BJ (cell line): ENCODE measurements at regions of chr18 and their contacts with region 1.

Region 1: GRCh38 chr18:3604498-3605408 is 154.8 kb downstream of the TGIF1 start:
- DNase-seq: peak; percentile 97
- H3K4me3 ChIP-seq: peak overlapping the region; percentile 45
- H3K27me3 ChIP-seq: no peaks in the 10 kb centered on the region
- CTCF ChIP-seq: no peak

Region 2: DNA sequence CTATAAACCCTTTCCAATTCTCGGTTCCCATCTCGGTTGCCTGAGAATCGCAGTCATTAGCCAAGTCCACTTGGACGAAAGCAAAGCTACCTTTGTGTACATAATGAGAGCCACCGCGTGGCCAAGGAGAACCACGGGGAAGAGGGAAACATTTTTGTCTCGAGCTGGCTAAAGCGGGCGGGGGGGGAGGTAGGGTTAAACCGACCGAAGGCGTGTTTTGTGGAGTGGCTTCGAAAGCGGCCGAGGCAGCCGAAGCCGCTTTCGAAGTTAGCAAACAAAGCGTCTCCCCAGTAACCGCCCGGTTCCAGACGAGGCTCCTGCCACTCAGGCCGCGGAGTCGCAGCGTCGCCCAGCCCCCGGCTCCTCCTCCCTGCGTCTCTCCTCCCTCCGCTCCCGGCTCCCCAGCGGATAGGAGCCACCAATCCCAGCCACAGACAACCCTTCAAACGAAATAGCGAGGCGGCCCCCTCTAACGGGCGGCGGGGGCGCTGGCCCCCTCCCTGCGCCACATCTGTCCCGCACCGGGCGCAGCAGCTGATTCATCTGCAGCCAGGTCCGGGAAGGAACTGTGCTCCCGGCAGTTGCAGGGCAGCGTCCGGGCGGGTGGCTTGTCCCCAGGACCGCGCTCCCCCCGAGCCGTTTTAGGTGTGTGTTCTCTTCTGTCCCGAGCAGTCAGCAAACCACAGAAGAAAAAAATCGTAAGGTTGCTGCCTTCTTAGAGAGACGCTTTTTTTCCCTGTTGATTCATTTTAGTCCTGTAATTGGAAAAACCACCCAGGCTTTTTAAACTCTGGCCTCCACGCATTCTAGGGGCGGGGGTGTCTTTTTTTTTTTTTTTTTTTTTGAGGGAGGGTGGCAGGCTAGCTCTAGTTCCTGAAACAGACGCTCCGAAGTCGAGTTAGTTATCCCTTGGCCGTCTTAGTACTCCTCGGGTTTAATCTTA is 156.6 kb before region 1 on chr18:
- CTCF ChIA-PET with region 1: no interaction called
- POLR2A ChIA-PET with region 1: interaction called, 24 read pairs
- DNase-seq: peak; percentile 92
- H3K4me3 ChIP-seq: peak overlapping the region; percentile 96
- H3K27me3 ChIP-seq: no peaks in the 10 kb centered on the region
- CTCF ChIP-seq: 0 out of 2 replicates have a peak, but pooled peaks have one; percentile 13

Region 3: DNA sequence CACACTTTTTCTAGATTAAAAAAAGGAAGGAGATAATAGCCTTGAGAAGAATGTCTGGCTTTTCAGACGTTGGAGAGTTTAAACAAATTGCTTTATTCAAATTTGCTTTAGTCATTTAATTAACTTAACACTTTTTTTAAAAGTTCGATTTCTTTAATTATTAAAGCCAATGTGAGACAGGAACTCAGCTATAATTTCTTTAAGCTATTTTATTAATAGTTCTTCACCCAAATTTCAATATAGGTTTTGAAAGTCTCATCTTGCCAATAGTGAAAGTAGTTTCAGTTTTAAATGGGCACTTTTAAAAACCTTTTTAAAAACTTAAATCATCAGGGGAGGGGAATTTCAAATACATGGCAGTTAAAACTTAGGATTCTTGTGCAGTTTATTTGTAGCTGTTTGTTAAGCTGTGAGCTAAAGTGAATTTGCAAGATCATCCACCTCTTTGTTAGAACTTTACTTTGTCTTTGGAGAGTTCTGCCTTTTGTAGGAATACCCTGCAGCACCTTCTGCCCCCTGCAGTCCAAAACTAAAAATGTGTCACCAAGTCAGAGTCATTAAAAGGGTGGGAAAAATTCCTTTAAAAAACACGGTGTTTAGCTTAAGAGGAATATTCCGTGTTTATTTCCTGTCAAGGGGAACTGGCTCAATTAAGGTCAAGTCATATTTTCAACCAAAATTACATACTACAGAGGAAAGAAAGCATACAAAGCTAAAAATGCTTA is 150.2 kb before region 1 on chr18:
- CTCF ChIA-PET with region 1: interaction called, 3 read pairs
- POLR2A ChIA-PET with region 1: interaction called, 16 read pairs
- DNase-seq: no peak
- H3K4me3 ChIP-seq: peak overlapping the region; percentile 26
- H3K27me3 ChIP-seq: no peaks in the 10 kb centered on the region
- CTCF ChIP-seq: peak; percentile 70

Region 4: DNA sequence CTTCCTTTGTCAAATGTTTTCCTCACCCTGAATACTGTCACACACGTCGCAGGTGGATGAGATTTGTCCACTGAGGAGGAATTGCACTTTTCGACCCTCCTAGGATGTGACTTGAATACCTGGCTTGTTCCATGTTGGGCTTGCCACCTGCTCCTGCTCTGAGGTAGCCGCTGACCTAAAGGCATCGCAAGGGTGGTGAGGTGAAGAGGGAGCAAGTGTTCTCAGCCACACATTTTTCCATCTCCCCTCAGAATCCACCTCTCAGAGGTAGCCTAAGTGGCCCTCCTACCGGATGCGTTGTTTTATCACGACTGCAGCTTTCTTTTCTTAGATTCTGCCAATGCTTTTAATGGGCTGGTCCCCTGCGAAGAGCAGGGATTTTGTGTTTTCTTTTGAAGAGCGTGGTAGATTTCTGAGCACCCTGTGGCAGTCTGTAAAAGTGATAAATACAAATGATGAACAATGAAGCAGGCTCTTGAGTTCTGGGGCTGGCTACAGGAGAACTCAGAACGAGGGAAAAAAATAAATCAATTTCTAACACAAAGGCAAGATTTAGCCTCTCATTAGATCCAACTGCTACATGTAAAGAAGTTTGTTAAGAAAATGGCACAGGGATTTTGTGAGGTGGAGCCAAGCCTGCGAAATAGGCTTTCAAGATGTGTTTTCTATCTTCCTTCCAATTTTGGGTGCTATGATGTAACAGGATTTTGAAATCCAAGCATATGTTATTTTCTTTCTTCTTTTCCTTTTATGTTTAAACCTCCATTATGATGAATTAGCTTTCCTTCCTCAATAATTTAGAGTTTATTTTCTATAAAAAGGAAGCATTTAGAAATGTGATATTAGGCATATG is 232.0 kb after region 1 on chr18:
- CTCF ChIA-PET with region 1: no interaction called
- POLR2A ChIA-PET with region 1: no interaction called
- DNase-seq: no peak
- H3K4me3 ChIP-seq: no peak overlapping the region
- H3K27me3 ChIP-seq: no peaks in the 10 kb centered on the region; the same call in 1 of the 2 replicates
- CTCF ChIP-seq: no peak